ENCODE measurements at regions of chrX and their contacts with region 1.

Region 1: DNA sequence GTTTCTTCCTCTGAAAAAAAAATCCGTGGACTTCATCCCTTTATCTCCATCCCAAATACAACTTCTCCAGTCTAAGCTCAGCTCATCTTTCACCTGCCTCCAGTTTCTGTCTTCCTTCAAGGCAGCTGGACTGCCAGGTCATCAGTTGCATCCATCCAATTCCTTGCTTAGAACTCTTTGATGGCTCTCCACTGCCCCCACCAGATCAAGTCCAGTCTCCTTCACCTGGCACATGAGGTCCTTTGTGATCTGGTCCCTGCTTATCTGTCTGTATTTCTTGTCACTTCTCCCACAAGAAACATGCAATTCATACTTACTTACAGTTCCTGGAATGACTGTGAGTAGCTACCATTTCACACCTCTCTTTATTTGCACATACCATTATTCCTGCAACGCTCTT is 33.8 kb downstream of the OTUD6A start:
- DNase-seq: no peak
- H3K4me3 ChIP-seq: no peak overlapping the region
- CTCF ChIP-seq: no peak

Region 2: GRCh38 chrX:69493193-69493592 is 602.9 kb before region 1 on chrX:
- CTCF ChIA-PET with region 1: interaction called, 12 read pairs
- POLR2A ChIA-PET with region 1: no interaction called
- DNase-seq: no peak
- H3K4me3 ChIP-seq: no peak overlapping the region
- CTCF ChIP-seq: peak; percentile 1

Region 3: DNA sequence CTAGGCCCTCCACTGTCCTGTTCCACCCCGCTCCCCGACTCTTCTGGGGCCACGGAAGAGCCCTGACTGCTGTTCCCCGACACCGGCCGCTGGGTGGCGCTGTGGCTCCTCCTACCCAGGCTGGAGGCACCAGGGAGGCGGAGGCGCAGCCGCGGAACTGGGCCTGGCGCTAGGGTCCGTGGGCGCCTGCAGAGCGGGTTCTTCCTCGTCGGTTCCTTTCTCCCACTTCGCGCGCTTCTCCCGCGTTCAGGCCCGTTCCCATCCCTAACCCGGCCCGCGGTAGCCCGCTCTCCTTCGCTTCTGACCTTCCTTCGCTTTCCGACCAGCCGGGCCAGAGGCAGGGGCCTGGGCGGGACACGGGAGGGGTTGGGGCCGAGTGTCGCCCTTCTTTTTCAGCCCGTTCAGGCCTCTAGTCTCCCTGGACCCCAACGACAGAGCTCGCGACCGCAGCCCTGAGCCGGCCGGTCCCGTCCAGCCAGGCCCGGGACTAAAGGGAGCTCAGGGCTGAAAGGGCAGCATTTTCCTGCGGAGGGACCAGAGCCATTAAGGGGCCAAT is 557.7 kb before region 1 on chrX:
- CTCF ChIA-PET with region 1: interaction called, 33 read pairs
- POLR2A ChIA-PET with region 1: no interaction called
- DNase-seq: no peak
- H3K4me3 ChIP-seq: peak overlapping the region; percentile 37
- CTCF ChIP-seq: peak; percentile 78

Region 4: DNA sequence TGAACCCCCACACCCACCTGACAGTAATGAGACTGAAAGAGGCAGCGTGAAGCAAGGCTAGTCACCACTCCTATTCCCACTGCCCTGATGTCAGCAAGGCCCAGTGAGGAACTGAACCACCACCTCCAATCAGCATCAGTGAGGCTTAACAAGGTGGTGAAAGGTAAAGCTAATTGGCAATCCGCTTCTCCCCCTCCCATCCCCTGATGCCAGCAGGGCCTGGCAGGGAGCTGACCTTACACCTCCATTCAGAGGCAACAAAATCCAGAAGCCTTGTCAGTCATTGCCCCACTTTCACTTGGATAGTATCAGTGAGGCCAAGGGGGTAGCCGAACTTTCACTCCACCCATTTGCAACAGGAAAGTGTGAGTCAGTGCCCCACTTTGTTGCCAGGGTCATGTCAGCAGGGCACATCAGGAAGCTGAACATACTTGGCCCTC is 107.1 kb before region 1 on chrX:
- CTCF ChIA-PET with region 1: no interaction called
- POLR2A ChIA-PET with region 1: no interaction called
- DNase-seq: no peak
- H3K4me3 ChIP-seq: no peak overlapping the region
- CTCF ChIP-seq: no peak

Region 5: GRCh38 chrX:70030301-70030767 is 65.7 kb before region 1 on chrX:
- CTCF ChIA-PET with region 1: interaction called, 103 read pairs
- POLR2A ChIA-PET with region 1: no interaction called
- DNase-seq: no peak
- H3K4me3 ChIP-seq: no peak overlapping the region
- CTCF ChIP-seq: peak; percentile 70

Region 6: DNA sequence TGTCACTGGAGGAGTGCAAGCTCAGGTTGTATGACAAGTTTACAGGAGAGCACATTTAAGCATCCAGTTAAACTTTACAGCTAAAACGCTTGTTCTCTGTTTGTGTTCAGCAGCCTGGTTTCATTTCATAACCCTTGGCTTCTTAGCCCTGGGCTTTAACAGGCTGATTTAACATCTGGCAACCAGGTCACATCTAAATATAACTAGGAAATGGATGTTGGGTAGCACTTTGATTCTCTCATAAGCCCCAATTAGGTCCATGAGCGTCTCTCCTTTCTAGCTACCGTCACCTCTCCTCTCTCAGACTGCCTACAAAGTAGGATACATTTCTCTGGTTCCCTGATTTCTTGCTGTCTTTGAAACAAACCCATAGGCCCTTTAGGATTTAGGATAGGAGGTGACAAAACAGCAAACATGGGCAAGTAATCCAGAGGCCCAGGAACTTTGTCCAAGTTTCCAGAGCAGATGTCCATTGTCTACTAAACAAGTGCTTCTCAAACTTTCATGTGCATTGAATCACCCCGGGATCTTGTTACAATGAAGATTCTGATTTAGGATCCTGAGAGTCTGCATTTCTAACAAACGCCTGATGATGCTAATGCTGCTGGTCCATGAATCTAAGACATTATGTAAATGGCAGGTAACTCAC is 11.3 kb before region 1 on chrX:
- CTCF ChIA-PET with region 1: interaction called, 12 read pairs
- POLR2A ChIA-PET with region 1: no interaction called
- DNase-seq: no peak
- H3K4me3 ChIP-seq: no peak overlapping the region
- CTCF ChIP-seq: no peak

Region 7: DNA sequence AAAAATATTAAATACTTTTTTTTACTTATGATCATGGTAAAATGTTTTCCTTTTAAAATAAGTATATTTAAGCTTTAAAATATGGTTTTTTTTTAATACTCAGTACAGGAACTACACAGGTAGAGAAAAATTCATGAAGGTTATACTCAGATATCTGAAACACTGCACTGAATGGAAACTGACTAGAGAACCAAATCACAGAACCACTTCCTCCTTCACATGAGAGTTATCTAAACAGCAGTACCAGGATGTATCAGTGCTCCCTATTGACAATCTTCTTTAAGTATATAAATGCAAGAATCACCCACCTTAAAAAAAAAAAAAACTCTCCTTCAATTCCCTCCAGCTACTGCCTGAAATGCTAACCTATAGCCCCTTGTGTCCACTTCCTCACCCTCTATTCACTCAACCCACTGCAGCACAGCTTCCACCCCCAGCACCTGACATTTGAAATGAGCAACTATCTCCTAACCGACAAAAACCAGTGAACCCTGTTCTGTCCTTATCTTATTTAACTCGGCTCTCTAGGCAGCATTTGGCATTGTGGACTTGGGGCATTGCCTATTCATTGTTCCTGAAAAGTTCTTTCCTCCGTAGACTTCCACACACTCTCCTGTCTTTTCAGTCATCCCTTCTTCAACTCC is 825.8 kb after region 1 on chrX:
- CTCF ChIA-PET with region 1: no interaction called
- POLR2A ChIA-PET with region 1: no interaction called
- DNase-seq: no peak
- H3K4me3 ChIP-seq: no peak overlapping the region
- CTCF ChIP-seq: no peak